Astrocyte of the cerebellum (primary cell): ENCODE measurements at regions of chr15 and their contacts with region 1.

Region 1: DNA sequence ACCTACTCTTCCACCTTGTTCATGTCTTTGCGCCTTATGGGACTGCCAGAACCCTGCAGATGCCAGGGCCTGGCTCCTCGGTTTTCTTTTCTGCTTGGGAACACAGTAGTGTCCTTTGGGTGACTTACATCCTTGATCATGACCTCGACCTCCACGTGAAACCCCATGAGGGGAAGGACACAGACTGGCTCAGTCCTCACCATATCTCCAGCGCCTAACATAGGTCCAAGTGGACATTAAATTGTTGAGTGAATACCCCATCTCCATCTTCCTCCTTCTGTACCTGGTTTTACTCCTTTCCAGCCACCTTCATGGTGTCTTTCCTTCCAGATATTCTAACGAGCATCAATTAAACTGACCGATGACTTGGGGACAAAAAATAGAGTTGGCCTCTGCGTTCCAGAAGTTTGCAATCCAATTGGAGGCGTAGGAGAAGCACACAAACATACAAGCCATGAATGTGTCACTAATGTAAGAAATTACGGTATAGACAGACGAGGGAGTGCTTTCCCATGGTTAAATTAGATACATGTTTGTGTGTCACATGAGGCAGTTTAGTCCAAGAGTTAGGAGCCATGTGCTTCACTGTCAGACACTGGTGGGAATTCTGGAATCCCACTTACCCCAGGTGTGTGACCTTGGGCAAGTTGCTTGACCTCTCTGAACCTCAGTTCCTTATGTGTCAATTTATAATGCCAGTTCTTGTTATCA is 907 bp upstream of the HERC1 start:
- DNase-seq: no peak
- H3K4me3 ChIP-seq: peak overlapping the region; percentile 86
- CTCF ChIP-seq: no peak

Region 2: DNA sequence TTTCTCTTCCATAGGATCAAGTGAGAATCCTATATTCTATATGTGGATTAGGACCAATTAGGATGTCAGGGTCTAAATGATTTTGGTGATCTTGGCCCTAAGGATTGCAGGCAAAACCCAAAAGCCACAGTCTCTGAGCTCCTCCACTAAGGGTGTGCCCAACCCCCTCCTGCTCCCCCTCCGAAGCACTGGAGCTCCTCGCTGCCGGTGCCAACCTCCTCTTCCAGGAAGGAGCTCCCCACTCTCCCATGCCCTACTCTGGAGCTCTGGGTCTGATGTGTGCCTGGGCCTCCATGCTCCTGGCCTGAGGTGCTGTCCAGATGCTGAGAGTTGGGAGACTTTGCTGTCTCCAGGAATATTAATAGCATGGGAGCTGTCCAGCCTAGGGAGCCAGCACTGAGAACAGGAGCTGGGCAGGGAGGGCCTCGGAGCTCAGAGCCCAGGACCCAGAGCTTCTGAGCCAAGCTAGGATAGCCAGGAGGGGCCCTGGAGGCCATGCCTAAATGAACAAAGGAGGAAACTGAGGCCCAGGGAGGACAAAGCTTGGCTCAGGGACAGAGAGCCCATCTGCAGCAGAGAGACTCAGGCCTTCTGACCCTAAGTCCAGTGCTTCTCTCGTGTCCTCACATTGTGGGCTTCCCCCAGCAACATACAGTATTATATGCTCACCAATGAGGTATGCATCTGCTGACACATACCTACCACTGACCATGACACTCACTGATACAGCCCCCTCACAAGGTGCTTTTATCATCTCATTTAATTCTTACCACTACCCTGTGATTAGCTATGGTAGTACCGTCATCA is 36.0 kb after region 1 on chr15:
- in situ Hi-C with region 1: loop called (anchors 5 kb)
- DNase-seq: peak; percentile 79
- H3K4me3 ChIP-seq: no peak overlapping the region
- CTCF ChIP-seq: no peak